Activated CD4-positive, alpha-beta T cell treated with anti-CD3 and anti-CD28 coated beads, Interleukin-2, amount 10 ng/mL, durations not matched to agents 24 days and 14 days (primary cell): ENCODE measurements at regions of chr18 and their contacts with region 1.

Region 1: GRCh38 chr18:10437837-10438236 is 16.6 kb upstream of the APCDD1 start:
- DNase-seq: no peak
- H3K4me3 Mint-ChIP-seq: no peak overlapping the region
- H3K27ac Mint-ChIP-seq: no peak overlapping the region
- H3K4me1 Mint-ChIP-seq: no peaks in the 10 kb centered on the region
- H3K27me3 Mint-ChIP-seq: peaks cover 9% of the 10 kb centered on the region

Region 2: DNA sequence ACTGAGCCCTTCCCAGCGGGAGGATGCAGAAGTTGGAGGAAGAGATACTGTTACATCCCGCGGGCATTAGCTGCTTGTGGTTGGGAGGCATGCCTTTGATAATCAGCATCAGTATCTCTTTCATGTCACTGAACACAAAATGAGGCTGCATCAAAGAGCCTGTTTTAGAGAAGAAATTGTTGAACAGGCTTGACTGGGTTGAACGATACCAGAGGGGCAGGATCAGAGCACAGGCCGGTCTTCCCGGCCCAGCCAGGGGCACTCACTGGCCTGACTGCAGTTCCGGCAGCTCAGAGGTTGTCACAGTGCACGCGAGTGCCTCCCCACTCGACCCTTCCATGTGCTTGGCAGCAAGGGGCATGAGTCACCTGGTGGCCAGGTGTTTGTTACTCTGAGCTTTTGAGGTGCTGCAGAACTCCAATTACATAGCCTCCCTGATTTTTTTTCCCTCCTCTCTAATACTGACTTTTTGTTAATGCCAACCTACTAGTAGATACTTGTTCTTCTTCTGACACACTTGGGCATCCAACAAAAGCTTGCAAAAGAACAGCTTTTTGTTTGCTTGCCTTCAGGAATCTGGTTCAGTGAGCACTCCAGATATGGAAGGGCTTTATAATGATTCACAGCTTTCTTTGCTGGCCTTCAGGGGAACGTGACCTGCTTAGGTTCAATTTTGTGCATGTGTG is 402.4 kb before region 1 on chr18:
- intact Hi-C with region 1: no loop called
- DNase-seq: no peak
- H3K4me3 Mint-ChIP-seq: no peak overlapping the region
- H3K27ac Mint-ChIP-seq: no peak overlapping the region
- H3K4me1 Mint-ChIP-seq: no peaks in the 10 kb centered on the region
- H3K27me3 Mint-ChIP-seq: peaks cover 19% of the 10 kb centered on the region

Region 3: DNA sequence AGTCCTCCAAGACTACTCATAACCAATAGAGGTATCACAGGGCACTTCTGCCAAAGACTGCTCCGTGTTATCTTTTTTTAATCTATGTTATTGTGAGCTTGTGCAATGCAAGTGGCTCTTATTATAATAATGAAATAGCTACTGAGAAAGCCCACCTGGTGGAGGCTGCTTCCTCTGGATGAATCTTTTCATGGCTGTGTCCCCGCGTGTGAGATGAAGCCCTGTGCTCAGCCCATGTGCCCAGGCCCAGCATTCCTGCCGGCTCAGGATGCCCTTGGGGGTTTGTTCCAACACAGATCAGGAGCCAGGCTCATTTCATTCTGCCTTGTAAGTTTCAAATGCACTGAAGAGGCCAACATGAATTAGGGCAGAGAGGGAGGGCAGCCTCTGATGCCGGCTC is 35.3 kb after region 1 on chr18:
- intact Hi-C with region 1: loop called (anchors 5 kb)
- DNase-seq: no peak
- H3K4me3 Mint-ChIP-seq: no peak overlapping the region
- H3K27ac Mint-ChIP-seq: no peak overlapping the region
- H3K4me1 Mint-ChIP-seq: no peaks in the 10 kb centered on the region
- H3K27me3 Mint-ChIP-seq: peaks cover 11% of the 10 kb centered on the region